MCF 10A (cell line): ENCODE measurements at regions of chr9 and their contacts with region 1.

Region 1: DNA sequence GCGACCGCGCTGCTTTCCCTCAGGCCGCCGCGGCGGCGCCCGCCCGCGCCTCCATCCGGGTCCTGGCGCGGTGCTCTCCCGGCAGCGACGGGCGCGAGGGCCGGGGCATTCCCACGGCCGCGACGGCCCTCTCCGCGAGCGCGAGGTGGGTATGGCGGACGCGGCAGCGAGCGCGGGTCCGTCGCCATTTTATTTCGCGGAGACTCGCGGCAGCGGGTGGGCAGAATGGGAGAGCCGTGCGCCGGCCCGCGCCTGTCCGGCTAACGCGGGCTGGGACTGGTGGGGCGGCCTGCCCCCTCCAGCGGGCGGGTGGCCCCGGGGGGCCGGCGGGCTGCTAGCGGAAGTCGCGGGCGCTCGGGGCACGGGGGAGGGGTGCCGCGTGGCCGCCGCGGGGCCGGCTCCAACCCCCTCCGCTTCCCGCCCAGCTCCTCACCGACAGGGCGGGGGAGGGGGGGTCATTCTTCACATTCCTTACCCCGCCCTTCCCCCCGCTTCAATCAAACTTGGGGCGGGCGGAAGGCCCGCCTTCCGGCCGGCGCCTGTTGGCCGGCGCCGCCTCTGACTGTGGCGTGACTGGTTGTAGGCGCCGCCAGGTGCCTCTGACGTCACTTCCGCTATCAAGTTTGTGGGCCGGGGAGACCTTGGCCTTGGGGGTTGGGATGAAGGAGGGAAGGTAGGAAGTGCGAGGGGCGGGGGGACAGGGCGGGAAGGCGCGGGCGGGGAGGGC is 82.1 kb downstream of the PTPDC1 start:
- DNase-seq: peak; percentile 99
- H3K4me3 Mint-ChIP-seq: peak overlapping the region; percentile 83
- H3K27ac Mint-ChIP-seq: peak overlapping the region; percentile 86
- H3K4me1 Mint-ChIP-seq: peaks cover 22% of the 10 kb centered on the region
- H3K27me3 Mint-ChIP-seq: no peaks in the 10 kb centered on the region
- CTCF ChIP-seq: no peak

Region 2: GRCh38 chr9:94030318-94031179 is 135.9 kb before region 1 on chr9:
- CTCF ChIA-PET with region 1: interaction called, 4 read pairs
- POLR2A ChIA-PET with region 1: interaction called, 13 read pairs
- intact Hi-C with region 1: no loop called
- DNase-seq: peak; percentile 86
- H3K4me3 Mint-ChIP-seq: peak overlapping the region; percentile 87
- H3K27ac Mint-ChIP-seq: peak overlapping the region; percentile 87
- H3K4me1 Mint-ChIP-seq: peaks cover 10% of the 10 kb centered on the region
- H3K27me3 Mint-ChIP-seq: no peaks in the 10 kb centered on the region
- CTCF ChIP-seq: no peak

Region 3: GRCh38 chr9:94084314-94084713 is 82.1 kb before region 1 on chr9 and contains the start of gene PTPDC1:
- CTCF ChIA-PET with region 1: interaction called, 4 read pairs
- POLR2A ChIA-PET with region 1: interaction called, 16 read pairs
- intact Hi-C with region 1: loop called (anchors 1 kb)
- DNase-seq: peak; percentile 32
- H3K4me3 Mint-ChIP-seq: peak within 1 kb of the TSS; percentile 47
- H3K27ac Mint-ChIP-seq: peak within 1 kb of the TSS; percentile 85
- H3K4me1 Mint-ChIP-seq: peaks cover 23% of the 10 kb centered on the region
- H3K27me3 Mint-ChIP-seq: no peaks in the 10 kb centered on the region
- CTCF ChIP-seq: no peak
- total RNA-seq, gene PTPDC1: 42.2 and 49.9 TPM in 2 replicates